ENCODE measurements at regions of chr16 and their contacts with region 1.

Region 1: GRCh38 chr16:12484972-12485371 is 318.7 kb downstream of the CPPED1 start:
- DNase-seq: no peak
- ATAC-seq: no peak
- H3K4me3 ChIP-seq: no peak overlapping the region
- H3K27ac ChIP-seq: no peak overlapping the region
- H3K4me1 ChIP-seq: no peaks in the 10 kb centered on the region
- H3K27me3 ChIP-seq: no peaks in the 10 kb centered on the region
- CTCF ChIP-seq: no peak

Region 2: DNA sequence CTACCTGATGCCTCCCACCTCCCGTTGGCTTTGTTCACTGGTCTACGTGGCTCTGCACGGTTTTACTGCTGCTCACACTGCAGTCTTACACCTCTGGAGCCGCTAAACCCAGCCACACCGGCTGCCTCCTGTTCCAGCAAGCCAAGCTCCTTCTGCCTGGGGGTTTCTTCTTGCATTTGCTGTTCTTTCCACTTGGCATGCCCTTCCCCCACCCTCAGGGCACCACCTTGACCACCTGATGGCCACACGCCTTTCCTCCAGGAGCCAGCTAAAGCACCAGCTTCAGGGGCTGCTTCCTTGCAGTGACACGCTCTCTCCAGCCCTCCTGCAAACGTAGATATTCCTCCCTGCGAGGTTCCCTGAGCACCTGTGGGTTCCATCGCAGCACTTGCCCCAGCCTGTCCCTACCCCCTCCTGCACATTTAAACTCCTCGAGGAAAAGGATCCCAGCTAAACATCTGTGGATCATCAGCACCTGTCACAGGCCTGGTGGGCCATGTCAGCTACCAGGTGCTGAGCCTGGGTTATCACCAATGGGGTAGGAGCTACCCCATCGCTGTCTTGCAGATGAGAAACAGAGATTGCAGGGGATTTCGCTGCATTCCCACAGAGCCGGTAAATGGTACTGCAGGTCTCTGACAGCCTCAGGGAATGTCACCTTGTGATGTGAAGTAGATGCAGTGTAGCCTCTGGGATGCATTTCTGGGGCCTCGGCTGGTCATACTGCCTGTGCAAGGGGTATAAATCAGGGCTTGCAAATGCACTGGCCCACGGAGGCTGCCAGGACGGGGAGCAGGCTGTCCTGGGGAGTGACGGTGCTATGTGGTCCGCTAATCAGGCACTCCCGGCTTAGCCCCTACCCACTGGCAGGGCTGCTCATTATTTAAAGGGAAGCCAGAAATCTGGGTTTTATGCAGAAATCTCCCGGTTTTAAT is 33.5 kb after region 1 on chr16:
- CTCF ChIA-PET with region 1: no interaction called
- POLR2A ChIA-PET with region 1: no interaction called
- in situ Hi-C with region 1: no loop called
- intact Hi-C with region 1: no loop called
- DNase-seq: no peak
- ATAC-seq: no peak
- H3K4me3 ChIP-seq: no peak overlapping the region
- H3K27ac ChIP-seq: no peak overlapping the region
- H3K4me1 ChIP-seq: no peaks in the 10 kb centered on the region
- H3K27me3 ChIP-seq: no peaks in the 10 kb centered on the region
- CTCF ChIP-seq: no peak

Region 3: GRCh38 chr16:12627394-12627793 is 142.4 kb after region 1 on chr16:
- CTCF ChIA-PET with region 1: no interaction called
- POLR2A ChIA-PET with region 1: interaction called, 13 read pairs
- in situ Hi-C with region 1: no loop called
- intact Hi-C with region 1: no loop called
- DNase-seq: no peak
- ATAC-seq: no peak
- H3K4me3 ChIP-seq: no peak overlapping the region
- H3K27ac ChIP-seq: no peak overlapping the region
- H3K4me1 ChIP-seq: no peaks in the 10 kb centered on the region
- H3K27me3 ChIP-seq: no peaks in the 10 kb centered on the region
- CTCF ChIP-seq: no peak

Measured in Panc1 (cell line).